Dendritic cell treated with granulocyte-macrophage colony-stimulating factor and Interleukin-4, amounts not matched to agents 40 ng/mL and 50 ng/mL, for 4 days (primary cell): ENCODE measurements at regions of chr12 and their contacts with region 1.

Region 1: GRCh38 chr12:990661-991349 is at the start of gene ERC1:
- H3K4me3 Mint-ChIP-seq: peak within 1 kb of the TSS; percentile 96
- H3K27ac Mint-ChIP-seq: peak within 1 kb of the TSS; percentile 91
- H3K4me1 Mint-ChIP-seq: peaks cover 57% of the 10 kb centered on the region
- H3K27me3 Mint-ChIP-seq: no peaks in the 10 kb centered on the region

Region 2: GRCh38 chr12:1047898-1048660 is 57.3 kb after region 1 on chr12:
- intact Hi-C with region 1: loop called (anchors 10 kb)
- H3K4me3 Mint-ChIP-seq: peak overlapping the region; percentile 75
- H3K27ac Mint-ChIP-seq: peak overlapping the region; percentile 88
- H3K4me1 Mint-ChIP-seq: peaks cover 26% of the 10 kb centered on the region
- H3K27me3 Mint-ChIP-seq: no peaks in the 10 kb centered on the region

Region 3: GRCh38 chr12:1093166-1093751 is 102.5 kb after region 1 on chr12:
- intact Hi-C with region 1: loop called (anchors 5 kb)
- H3K4me3 Mint-ChIP-seq: no peak overlapping the region
- H3K27ac Mint-ChIP-seq: no peak overlapping the region
- H3K4me1 Mint-ChIP-seq: no peaks in the 10 kb centered on the region
- H3K27me3 Mint-ChIP-seq: no peaks in the 10 kb centered on the region

Region 4: DNA sequence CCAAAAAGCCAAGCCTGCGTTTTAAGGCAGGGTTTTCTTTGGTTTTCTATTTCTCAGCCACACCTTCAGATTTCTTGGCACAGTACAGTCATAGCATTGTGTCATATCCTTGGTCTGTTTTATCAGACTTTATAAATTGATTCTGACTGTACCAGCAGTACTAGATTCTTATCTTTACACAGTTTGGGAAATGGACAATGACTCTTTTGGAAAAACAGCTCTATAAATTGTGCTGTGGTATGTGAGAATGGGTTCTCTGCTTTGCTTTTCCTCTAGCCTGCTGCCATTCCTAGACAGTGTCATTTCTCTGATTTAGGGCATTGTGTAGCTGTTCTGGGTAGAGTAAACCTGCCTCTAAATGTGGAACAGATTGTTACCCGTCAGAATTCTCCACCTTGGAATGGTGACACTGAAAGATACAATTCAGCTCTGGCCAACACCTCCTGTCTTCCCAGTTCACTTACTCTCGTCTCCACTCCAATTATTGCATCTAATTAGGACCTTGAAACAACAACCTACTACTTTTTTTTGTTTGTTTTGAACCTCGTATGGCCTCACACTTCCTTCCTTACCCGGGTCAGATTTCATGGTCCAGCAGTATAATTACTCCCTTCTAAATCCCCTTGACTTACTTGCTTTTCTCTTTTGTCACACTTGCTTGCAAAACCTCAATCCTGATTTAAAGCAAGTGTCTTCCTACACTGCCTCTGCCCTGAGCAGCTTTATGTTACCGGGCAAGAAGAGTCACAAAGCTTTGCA is 226.6 kb after region 1 on chr12:
- intact Hi-C with region 1: no loop called
- H3K4me3 Mint-ChIP-seq: no peak overlapping the region
- H3K27ac Mint-ChIP-seq: no peak overlapping the region
- H3K4me1 Mint-ChIP-seq: no peaks in the 10 kb centered on the region
- H3K27me3 Mint-ChIP-seq: no peaks in the 10 kb centered on the region